Mammary epithelial cell (primary cell): ENCODE measurements at regions of chr4 and their contacts with region 1.

Region 1: GRCh38 chr4:138835832-138836533 is 179.6 kb upstream of the NOCT start:
- DNase-seq: peak; percentile 29
- H3K4me3 ChIP-seq: no peak overlapping the region
- H3K27ac ChIP-seq: no peak overlapping the region
- H3K4me1 ChIP-seq: no peaks in the 10 kb centered on the region
- H3K27me3 ChIP-seq: peaks cover 4% of the 10 kb centered on the region
- CTCF ChIP-seq: peak in 1 of 2 donors; percentile 19

Region 2: GRCh38 chr4:138861135-138861534 is 25.2 kb after region 1 on chr4:
- CTCF ChIA-PET with region 1: no interaction called
- dilution Hi-C with region 1: no loop called
- in situ Hi-C with region 1: no loop called
- intact Hi-C with region 1: no loop called
- DNase-seq: no peak
- H3K4me3 ChIP-seq: no peak overlapping the region
- H3K27ac ChIP-seq: no peak overlapping the region
- H3K4me1 ChIP-seq: no peaks in the 10 kb centered on the region
- H3K27me3 ChIP-seq: peaks cover under 1% of the 10 kb centered on the region
- CTCF ChIP-seq: no peak

Region 3: GRCh38 chr4:138919094-138919936 is 83.3 kb after region 1 on chr4:
- CTCF ChIA-PET with region 1: no interaction called
- dilution Hi-C with region 1: no loop called
- in situ Hi-C with region 1: no loop called
- intact Hi-C with region 1: loop called (anchors 1 kb)
- DNase-seq: peak; percentile 74
- H3K4me3 ChIP-seq: no peak overlapping the region
- H3K27ac ChIP-seq: no peak overlapping the region
- H3K4me1 ChIP-seq: no peaks in the 10 kb centered on the region
- H3K27me3 ChIP-seq: no peaks in the 10 kb centered on the region
- CTCF ChIP-seq: peak; percentile 87 to 92